GM10248 (cell line): ENCODE measurements at regions of chr3 and their contacts with region 1.

Region 1: GRCh38 chr3:187679638-187680396 is 9.6 kb upstream of the SST start:
- DNase-seq: peak; percentile 67
- CTCF ChIP-seq: peak; percentile 95

Region 2: DNA sequence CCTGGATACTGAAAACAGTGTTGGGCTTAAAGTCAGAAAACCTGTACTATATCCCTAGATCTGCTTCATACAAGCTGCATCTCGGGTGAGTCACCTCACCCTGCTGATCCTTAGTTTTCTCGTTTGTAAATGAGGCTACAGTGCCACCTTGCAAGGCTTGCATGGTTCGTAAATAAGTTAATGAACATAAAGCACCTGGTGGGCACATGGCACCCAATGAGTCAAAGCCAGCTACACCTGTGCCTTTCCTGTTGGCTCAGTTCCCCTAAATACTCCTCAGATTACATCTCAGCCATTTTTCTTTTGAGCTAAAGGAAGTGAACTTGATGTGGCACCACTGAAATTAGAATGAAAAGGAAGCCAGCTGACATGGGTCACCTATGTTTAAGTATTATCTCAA is 456.0 kb before region 1 on chr3:
- CTCF ChIA-PET with region 1: interaction called, 22 read pairs
- POLR2A ChIA-PET with region 1: no interaction called
- DNase-seq: no peak
- CTCF ChIP-seq: no peak

Region 3: GRCh38 chr3:187305881-187306280 is 373.9 kb before region 1 on chr3:
- CTCF ChIA-PET with region 1: interaction called, 21 read pairs
- POLR2A ChIA-PET with region 1: no interaction called
- DNase-seq: no peak
- CTCF ChIP-seq: no peak

Region 4: GRCh38 chr3:187642861-187643260 is 37.0 kb before region 1 on chr3:
- CTCF ChIA-PET with region 1: interaction called, 11 read pairs
- POLR2A ChIA-PET with region 1: no interaction called
- DNase-seq: no peak
- CTCF ChIP-seq: no peak

Region 5: DNA sequence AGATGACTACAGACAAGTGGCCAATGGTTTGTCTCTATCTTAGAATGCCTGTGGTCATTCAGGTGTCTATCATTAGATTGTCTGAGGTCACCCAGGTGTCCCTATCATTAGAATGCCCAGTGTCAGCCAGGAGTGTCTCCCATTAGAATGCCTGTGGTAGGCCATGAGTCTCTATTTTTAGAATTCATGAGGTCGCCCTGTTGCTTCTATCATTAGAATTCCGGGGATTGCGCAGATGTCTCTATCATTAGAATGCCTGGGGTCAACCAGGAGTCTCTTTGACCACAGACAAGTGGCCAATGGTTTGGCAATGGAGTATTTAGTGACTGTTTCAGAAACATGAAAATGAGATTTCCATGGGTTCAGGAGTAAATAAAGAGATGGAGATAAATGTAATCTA is 15.0 kb after region 1 on chr3:
- CTCF ChIA-PET with region 1: interaction called, 22 read pairs
- POLR2A ChIA-PET with region 1: no interaction called
- DNase-seq: no peak
- CTCF ChIP-seq: no peak

Region 6: GRCh38 chr3:187714404-187714979 is 34.7 kb after region 1 on chr3:
- CTCF ChIA-PET with region 1: interaction called, 25 read pairs
- POLR2A ChIA-PET with region 1: no interaction called
- DNase-seq: peak; percentile 66
- CTCF ChIP-seq: peak; percentile 82